T-cell (primary cell): ENCODE measurements at regions of chr12 and their contacts with region 1.

Region 1: GRCh38 chr12:75944097-75944904 is 87.3 kb downstream of the PHLDA1 start:
- DNase-seq: peak in 1 of 35 experiments; percentile 46
- ATAC-seq: peak; percentile 87 to 95 (median 94)
- H3K4me3 ChIP-seq: no peak overlapping the region
- H3K4me3 Mint-ChIP-seq: peak overlapping the region in 2 of 3 donors; percentile 61 to 66
- H3K27ac ChIP-seq: peak overlapping the region; percentile 72
- H3K27ac Mint-ChIP-seq: peak overlapping the region; percentile 97
- H3K4me1 ChIP-seq: peaks cover 3 to 7% of the 10 kb centered on the region in 2 experiments
- H3K4me1 Mint-ChIP-seq: peaks cover 12 to 21% (median 20%) of the 10 kb centered on the region in 3 donors
- H3K27me3 ChIP-seq: no peaks in the 10 kb centered on the region
- H3K27me3 Mint-ChIP-seq: no peaks in the 10 kb centered on the region

Region 2: GRCh38 chr12:75913502-75914351 is 30.6 kb before region 1 on chr12:
- CTCF ChIA-PET with region 1: no interaction called
- POLR2A ChIA-PET with region 1: interaction called in 1 of 2 experiments, 12 read pairs
- DNase-seq: no peak
- ATAC-seq: no peak
- H3K4me3 ChIP-seq: no peak overlapping the region
- H3K4me3 Mint-ChIP-seq: no peak overlapping the region
- H3K27ac ChIP-seq: no peak overlapping the region
- H3K27ac Mint-ChIP-seq: no peak overlapping the region
- H3K4me1 ChIP-seq: no peaks in the 10 kb centered on the region
- H3K4me1 Mint-ChIP-seq: peaks cover 0 to 12% (median 1%) of the 10 kb centered on the region in 3 donors
- H3K27me3 ChIP-seq: no peaks in the 10 kb centered on the region
- H3K27me3 Mint-ChIP-seq: no peaks in the 10 kb centered on the region